PC-9 (cell line): ENCODE measurements at regions of chr1 and their contacts with region 1.

Region 1: GRCh38 chr1:101288491-101288944 is 51.7 kb downstream of the S1PR1 start:
- DNase-seq: peak; percentile 65 to 95
- H3K4me3 ChIP-seq: no peak overlapping the region; the same call in 1 of the 2 replicates
- H3K27ac ChIP-seq: no peak overlapping the region
- H3K4me1 ChIP-seq: peaks cover 25% of the 10 kb centered on the region
- H3K27me3 ChIP-seq: no peaks in the 10 kb centered on the region
- CTCF ChIP-seq: peak; percentile 99

Region 2: DNA sequence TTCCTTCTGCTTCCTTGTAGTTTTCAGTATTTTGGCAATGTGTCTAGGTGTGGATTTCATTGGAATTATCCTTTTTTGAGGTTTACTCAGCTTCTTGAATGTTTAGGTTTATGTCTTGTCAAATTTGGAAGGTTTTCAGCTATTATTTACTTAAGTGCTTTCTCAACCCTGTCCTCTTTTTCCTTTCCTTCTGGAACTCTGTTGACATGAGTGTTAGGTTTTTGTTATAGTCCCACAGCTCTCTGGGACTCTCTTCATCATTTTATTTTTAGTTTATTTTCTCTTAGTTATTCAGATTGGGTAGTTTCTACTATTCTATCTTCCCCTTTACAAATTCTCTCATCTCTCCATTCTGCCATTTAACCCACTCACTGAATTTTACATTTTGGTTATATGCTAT is 813.7 kb before region 1 on chr1:
- CTCF ChIA-PET with region 1: no interaction called
- POLR2A ChIA-PET with region 1: no interaction called
- intact Hi-C with region 1: no loop called
- DNase-seq: no peak
- H3K4me3 ChIP-seq: no peak overlapping the region
- H3K27ac ChIP-seq: no peak overlapping the region
- H3K4me1 ChIP-seq: no peaks in the 10 kb centered on the region
- H3K27me3 ChIP-seq: no peaks in the 10 kb centered on the region
- CTCF ChIP-seq: no peak

Region 3: DNA sequence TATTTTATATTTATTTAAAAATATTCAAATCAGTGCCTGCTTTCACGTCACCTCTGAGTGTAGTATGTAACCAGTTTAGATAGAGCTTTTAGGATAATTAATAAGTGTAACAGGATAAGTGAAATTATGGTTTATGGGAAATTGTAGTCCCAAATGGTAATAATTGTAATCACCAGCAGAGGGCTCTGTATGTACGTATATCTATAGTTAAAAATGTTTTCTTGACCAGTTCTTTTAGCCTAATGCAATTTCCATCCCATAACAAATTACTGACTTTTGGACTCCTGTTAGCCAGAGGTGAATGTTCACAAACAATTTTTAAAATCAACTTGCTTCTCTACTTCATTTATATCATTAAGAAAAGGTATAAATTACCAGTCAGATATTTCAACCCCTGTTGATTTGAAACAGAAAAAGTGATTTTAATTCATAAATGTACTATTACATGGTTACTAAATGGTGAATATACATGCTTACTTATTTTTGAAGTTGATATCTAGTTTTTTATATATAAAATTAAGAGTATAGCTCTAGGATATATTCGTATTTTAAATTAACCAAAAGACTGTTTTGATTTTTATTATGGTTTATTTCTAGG is 367.3 kb before region 1 on chr1:
- CTCF ChIA-PET with region 1: interaction called, 3 read pairs
- POLR2A ChIA-PET with region 1: no interaction called
- intact Hi-C with region 1: loop called (anchors 1 kb)
- DNase-seq: no peak
- H3K4me3 ChIP-seq: no peak overlapping the region
- H3K27ac ChIP-seq: no peak overlapping the region
- H3K4me1 ChIP-seq: no peaks in the 10 kb centered on the region
- H3K27me3 ChIP-seq: no peaks in the 10 kb centered on the region
- CTCF ChIP-seq: peak; percentile 95

Region 4: GRCh38 chr1:101025657-101026504 is 262.6 kb before region 1 on chr1 and contains the start of gene DPH5:
- CTCF ChIA-PET with region 1: no interaction called
- POLR2A ChIA-PET with region 1: no interaction called
- intact Hi-C with region 1: loop called (anchors 1 kb)
- DNase-seq: peak; percentile 84 to 87
- H3K4me3 ChIP-seq: peak within 1 kb of the TSS; percentile 75
- H3K27ac ChIP-seq: peak within 1 kb of the TSS; percentile 77
- H3K4me1 ChIP-seq: peaks cover 18% of the 10 kb centered on the region
- H3K27me3 ChIP-seq: no peaks in the 10 kb centered on the region
- CTCF ChIP-seq: no peak
- total RNA-seq, gene DPH5: 38.8 and 39.4 TPM in 2 replicates

Region 5: GRCh38 chr1:101130673-101131072 is 157.8 kb before region 1 on chr1:
- CTCF ChIA-PET with region 1: no interaction called
- POLR2A ChIA-PET with region 1: no interaction called
- intact Hi-C with region 1: loop called (anchors 1 kb)
- DNase-seq: peak in 1 of 2 experiments; percentile 33
- H3K4me3 ChIP-seq: no peak overlapping the region
- H3K27ac ChIP-seq: no peak overlapping the region
- H3K4me1 ChIP-seq: no peaks in the 10 kb centered on the region
- H3K27me3 ChIP-seq: no peaks in the 10 kb centered on the region
- CTCF ChIP-seq: no peak